ENCODE measurements at regions of chr12 and their contacts with region 1.

Region 1: DNA sequence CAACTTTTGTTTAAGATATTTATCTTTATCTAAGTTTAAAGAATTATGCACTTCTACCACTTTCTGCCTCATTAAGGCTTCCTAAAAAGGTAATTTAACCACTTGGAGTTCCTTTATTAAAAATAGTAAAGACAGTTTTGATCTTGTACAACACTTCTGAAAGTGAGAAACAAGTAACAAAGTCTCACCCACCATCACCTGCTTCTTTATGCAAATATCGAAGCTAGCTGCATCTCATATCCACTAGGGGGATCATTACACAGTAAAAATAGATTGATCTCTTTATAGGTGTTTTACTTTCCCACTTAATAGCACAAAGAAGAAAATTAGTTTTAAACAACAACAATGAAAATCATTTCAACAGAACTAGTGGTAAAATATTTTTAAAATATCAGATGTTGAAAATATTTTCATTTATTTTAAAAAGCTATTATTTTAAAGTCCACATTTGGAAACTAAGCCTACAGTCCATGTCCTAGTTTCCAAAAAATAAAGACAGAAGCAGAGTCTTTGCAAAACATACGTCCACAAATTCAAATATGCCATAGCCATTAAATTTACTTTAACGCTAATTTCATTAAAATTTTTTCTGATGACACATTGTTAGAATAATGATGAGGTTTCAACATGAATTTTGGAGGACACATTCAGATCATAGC is 160.0 kb upstream of the SOX5 start:
- H3K4me3 Mint-ChIP-seq: no peak overlapping the region
- H3K27ac Mint-ChIP-seq: no peak overlapping the region
- H3K4me1 Mint-ChIP-seq: no peaks in the 10 kb centered on the region
- H3K27me3 Mint-ChIP-seq: no peaks in the 10 kb centered on the region

Region 2: GRCh38 chr12:24143928-24144327 is 34.4 kb after region 1 on chr12:
- intact Hi-C with region 1: no loop called
- H3K4me3 Mint-ChIP-seq: no peak overlapping the region
- H3K27ac Mint-ChIP-seq: no peak overlapping the region
- H3K4me1 Mint-ChIP-seq: peaks cover under 1% of the 10 kb centered on the region
- H3K27me3 Mint-ChIP-seq: no peaks in the 10 kb centered on the region

Region 3: DNA sequence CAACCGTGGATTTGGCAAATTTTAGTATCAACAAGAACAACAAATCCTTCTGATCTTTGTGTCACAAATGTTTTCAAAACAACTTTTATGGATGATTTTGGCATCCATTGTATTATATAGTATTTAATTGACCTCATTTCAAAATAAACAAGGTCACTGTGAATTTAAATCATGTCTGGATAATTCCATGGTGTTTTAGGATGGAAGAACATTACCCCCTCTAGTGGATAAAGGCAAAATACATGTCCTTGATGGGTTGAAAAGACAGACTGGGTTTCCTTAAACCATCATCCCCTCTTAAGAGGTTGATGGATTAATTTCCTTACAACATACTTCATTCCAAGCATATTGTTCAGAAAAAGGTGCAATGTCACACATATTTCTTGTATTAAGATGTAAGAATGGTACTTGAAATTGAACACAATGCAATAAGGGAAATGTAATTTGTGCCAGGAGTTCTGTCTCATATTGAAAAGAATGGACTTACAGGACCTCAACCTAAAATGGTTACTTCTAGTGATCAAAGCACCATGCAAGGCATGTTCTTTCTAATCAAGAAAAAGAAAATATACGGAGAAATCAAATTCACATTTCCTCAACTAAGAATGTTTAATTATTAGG is 487.4 kb after region 1 on chr12:
- intact Hi-C with region 1: loop called (anchors 5 kb)
- H3K4me3 Mint-ChIP-seq: no peak overlapping the region
- H3K27ac Mint-ChIP-seq: no peak overlapping the region
- H3K4me1 Mint-ChIP-seq: peaks cover 8% of the 10 kb centered on the region
- H3K27me3 Mint-ChIP-seq: peaks cover 5% of the 10 kb centered on the region

Region 4: DNA sequence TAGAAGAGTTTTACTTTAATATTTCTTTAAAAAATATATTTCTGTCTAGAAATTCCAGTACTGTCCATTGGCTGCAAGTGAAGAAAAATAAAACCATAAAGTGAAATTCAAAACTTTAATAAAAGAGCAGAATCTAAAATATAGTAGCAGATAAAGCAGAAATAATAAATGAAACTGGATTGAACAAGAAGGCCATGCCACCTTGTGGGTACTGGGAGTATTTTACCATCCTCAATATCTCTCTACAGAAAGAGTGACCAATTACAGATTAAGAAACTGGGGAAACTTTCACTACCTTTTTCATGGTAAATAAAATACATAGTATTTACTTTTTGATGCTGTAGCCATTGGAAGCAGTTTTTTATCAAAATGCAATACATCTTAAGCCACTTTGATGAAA is 618.9 kb after region 1 on chr12:
- intact Hi-C with region 1: loop called (anchors 5 kb)
- H3K4me3 Mint-ChIP-seq: no peak overlapping the region
- H3K27ac Mint-ChIP-seq: no peak overlapping the region
- H3K4me1 Mint-ChIP-seq: peaks cover 20% of the 10 kb centered on the region
- H3K27me3 Mint-ChIP-seq: no peaks in the 10 kb centered on the region

Region 5: DNA sequence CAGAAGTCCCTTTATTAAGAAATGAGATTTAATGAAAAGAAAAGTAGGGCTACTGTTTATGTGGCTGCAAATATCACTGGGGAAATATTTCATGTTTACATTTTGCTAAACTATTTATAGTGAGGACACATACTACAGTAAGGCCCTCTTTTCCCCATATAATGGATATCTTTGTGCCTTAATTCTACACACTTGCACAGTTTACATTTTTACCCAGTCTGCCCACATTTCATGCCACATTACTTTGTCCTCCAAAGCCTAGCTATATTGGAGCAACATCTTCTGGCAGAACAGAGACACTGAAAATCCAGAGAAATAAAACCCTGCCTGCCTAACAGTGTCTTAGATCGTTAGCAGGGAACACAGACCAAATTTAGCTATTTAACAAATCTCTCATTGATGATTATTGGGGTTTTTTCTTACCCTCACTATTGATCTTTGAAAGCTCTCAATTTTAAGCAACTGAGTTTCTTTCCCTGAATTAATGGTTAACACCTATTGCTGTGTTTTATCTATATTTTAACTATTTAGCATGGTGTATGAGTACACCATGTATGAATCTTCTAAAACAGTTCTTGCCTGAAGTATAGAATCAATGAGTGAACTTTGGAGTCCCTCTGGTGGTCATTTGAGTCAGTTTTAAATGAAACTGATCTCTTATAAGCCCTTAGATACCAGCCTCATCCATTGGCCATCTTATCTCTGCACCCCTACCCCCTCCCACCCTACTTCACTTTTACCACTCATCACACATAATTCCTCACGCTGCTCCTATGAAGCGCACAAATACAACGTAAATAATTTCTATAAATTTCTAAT is 669.2 kb after region 1 on chr12:
- intact Hi-C with region 1: loop called (anchors 2 kb)
- H3K4me3 Mint-ChIP-seq: no peak overlapping the region
- H3K27ac Mint-ChIP-seq: no peak overlapping the region
- H3K4me1 Mint-ChIP-seq: peaks cover 6% of the 10 kb centered on the region
- H3K27me3 Mint-ChIP-seq: no peaks in the 10 kb centered on the region